SK-N-SH (cell line): ENCODE measurements at regions of chr1 and their contacts with region 1.

Region 1: GRCh38 chr1:22889213-22889827 is 83.3 kb downstream of the LACTBL1 start:
- DNase-seq: peak; percentile 75
- H3K4me3 ChIP-seq: no peak overlapping the region
- H3K27ac ChIP-seq: peak overlapping the region in 1 of 2 experiments; percentile 29; a peak in 1 of 4 replicates
- H3K4me1 ChIP-seq: peaks cover 0 to 9% of the 10 kb centered on the region in 2 experiments; a peak in 1 of 4 replicates
- H3K27me3 ChIP-seq: no peaks in the 10 kb centered on the region
- CTCF ChIP-seq: peak; percentile 84
- EP300 ChIP-seq: no peak
- RAD21 ChIP-seq: peak; percentile 85

Region 2: DNA sequence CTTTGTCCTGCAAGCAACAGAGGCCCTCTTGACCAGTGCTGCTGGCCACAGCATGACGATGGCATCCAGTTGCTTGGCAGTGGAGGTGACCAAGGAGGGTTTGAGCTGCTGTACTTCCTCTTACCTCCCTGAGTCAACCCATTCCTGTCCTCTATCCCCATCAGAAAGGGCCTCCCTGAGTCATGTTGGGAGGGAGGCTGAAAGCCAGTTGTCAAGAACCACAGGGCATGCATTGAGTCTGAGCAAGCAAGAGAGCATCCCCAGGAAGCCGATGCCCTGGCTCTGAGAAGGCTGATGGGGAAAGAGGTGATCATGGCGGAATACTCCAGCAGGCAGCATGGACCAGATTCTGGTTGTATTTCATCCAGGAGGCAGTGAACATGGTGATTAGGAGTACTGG is 13.8 kb after region 1 on chr1:
- CTCF ChIA-PET with region 1: interaction called, 12 read pairs
- POLR2A ChIA-PET with region 1: no interaction called
- DNase-seq: no peak
- H3K4me3 ChIP-seq: no peak overlapping the region
- H3K27ac ChIP-seq: no peak overlapping the region
- H3K4me1 ChIP-seq: peaks cover 0 to 6% of the 10 kb centered on the region in 2 experiments; a peak in 2 of 4 replicates
- H3K27me3 ChIP-seq: no peaks in the 10 kb centered on the region
- CTCF ChIP-seq: no peak
- EP300 ChIP-seq: no peak
- RAD21 ChIP-seq: no peak

Region 3: GRCh38 chr1:23062271-23062670 is 173.0 kb after region 1 on chr1:
- CTCF ChIA-PET with region 1: no interaction called
- POLR2A ChIA-PET with region 1: no interaction called
- DNase-seq: no peak
- H3K4me3 ChIP-seq: no peak overlapping the region
- H3K27ac ChIP-seq: no peak overlapping the region
- H3K4me1 ChIP-seq: peaks cover 0 to 9% of the 10 kb centered on the region in 2 experiments; a peak in 2 of 4 replicates
- H3K27me3 ChIP-seq: no peaks in the 10 kb centered on the region
- CTCF ChIP-seq: no peak
- EP300 ChIP-seq: no peak
- RAD21 ChIP-seq: no peak